CD4-positive, alpha-beta memory T cell (primary cell): ENCODE measurements at regions of chr12 and their contacts with region 1.

Region 1: DNA sequence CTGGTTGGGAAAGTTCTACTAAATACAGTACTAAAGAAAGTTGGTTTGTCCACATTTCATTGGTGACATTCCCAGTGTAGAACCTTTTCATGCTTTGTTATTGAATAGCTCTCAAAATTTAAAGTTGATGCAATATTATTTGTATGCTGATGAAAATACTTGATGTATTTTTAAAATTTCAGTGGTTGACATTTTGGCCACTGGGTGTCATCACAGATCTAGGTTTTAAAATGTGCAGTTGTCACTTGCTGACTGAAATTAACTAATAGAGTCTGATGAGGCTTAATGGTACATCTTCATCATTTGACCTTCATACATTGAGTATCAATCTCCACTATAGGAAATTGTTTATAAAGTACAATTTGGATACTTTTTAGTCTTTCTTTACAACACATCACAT is 37.1 kb downstream of the CMAS start:
- DNase-seq: peak; percentile 38 to 55 (median 51)
- H3K4me3 ChIP-seq: no peak overlapping the region
- H3K4me3 Mint-ChIP-seq: no peak overlapping the region
- H3K27ac ChIP-seq: no peak overlapping the region
- H3K27ac Mint-ChIP-seq: no peak overlapping the region
- H3K4me1 ChIP-seq: no peaks in the 10 kb centered on the region
- H3K4me1 Mint-ChIP-seq: no peaks in the 10 kb centered on the region
- H3K27me3 ChIP-seq: no peaks in the 10 kb centered on the region
- H3K27me3 Mint-ChIP-seq: no peaks in the 10 kb centered on the region

Region 2: GRCh38 chr12:21891751-21892217 is 191.4 kb before region 1 on chr12:
- CTCF ChIA-PET with region 1: no interaction called
- POLR2A ChIA-PET with region 1: no interaction called
- intact Hi-C with region 1: no loop called
- DNase-seq: no peak
- H3K4me3 ChIP-seq: no peak overlapping the region
- H3K4me3 Mint-ChIP-seq: no peak overlapping the region
- H3K27ac ChIP-seq: no peak overlapping the region
- H3K27ac Mint-ChIP-seq: no peak overlapping the region
- H3K4me1 ChIP-seq: no peaks in the 10 kb centered on the region
- H3K4me1 Mint-ChIP-seq: no peaks in the 10 kb centered on the region
- H3K27me3 ChIP-seq: no peaks in the 10 kb centered on the region
- H3K27me3 Mint-ChIP-seq: peaks cover 0 to 3% of the 10 kb centered on the region in 2 donors

Region 3: DNA sequence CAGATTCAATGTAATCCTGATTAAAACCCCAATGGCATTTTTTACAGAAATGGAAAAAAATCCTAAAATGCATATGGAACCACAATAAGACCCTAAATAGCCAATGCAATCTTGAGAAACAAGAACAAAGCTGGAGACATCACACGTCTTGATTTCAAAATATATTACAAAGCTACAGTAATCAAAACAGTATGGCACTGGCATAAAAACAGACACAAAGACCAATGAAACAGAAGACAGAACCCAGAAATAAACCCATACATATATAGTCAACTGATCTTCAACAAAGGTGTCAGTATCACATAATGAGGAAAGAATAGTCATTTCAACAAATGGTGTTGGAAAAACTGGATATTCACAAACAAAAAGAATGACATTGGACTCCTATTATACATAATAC is 132.5 kb before region 1 on chr12:
- CTCF ChIA-PET with region 1: no interaction called
- POLR2A ChIA-PET with region 1: no interaction called
- intact Hi-C with region 1: no loop called
- DNase-seq: no peak
- H3K4me3 ChIP-seq: no peak overlapping the region
- H3K4me3 Mint-ChIP-seq: peak overlapping the region in 1 of 8 donors; percentile 16
- H3K27ac ChIP-seq: no peak overlapping the region
- H3K27ac Mint-ChIP-seq: no peak overlapping the region
- H3K4me1 ChIP-seq: no peaks in the 10 kb centered on the region
- H3K4me1 Mint-ChIP-seq: no peaks in the 10 kb centered on the region
- H3K27me3 ChIP-seq: no peaks in the 10 kb centered on the region
- H3K27me3 Mint-ChIP-seq: peaks cover 2 to 3% of the 10 kb centered on the region in 2 donors

Region 4: GRCh38 chr12:22069856-22070565 is 13.2 kb before region 1 on chr12:
- CTCF ChIA-PET with region 1: interaction called, 18 read pairs
- POLR2A ChIA-PET with region 1: no interaction called
- intact Hi-C with region 1: no loop called
- DNase-seq: no peak
- H3K4me3 ChIP-seq: no peak overlapping the region
- H3K4me3 Mint-ChIP-seq: no peak overlapping the region
- H3K27ac ChIP-seq: no peak overlapping the region
- H3K27ac Mint-ChIP-seq: no peak overlapping the region
- H3K4me1 ChIP-seq: no peaks in the 10 kb centered on the region
- H3K4me1 Mint-ChIP-seq: peaks cover 0 to 2% (median 0%) of the 10 kb centered on the region in 4 donors
- H3K27me3 ChIP-seq: no peaks in the 10 kb centered on the region
- H3K27me3 Mint-ChIP-seq: no peaks in the 10 kb centered on the region

Region 5: DNA sequence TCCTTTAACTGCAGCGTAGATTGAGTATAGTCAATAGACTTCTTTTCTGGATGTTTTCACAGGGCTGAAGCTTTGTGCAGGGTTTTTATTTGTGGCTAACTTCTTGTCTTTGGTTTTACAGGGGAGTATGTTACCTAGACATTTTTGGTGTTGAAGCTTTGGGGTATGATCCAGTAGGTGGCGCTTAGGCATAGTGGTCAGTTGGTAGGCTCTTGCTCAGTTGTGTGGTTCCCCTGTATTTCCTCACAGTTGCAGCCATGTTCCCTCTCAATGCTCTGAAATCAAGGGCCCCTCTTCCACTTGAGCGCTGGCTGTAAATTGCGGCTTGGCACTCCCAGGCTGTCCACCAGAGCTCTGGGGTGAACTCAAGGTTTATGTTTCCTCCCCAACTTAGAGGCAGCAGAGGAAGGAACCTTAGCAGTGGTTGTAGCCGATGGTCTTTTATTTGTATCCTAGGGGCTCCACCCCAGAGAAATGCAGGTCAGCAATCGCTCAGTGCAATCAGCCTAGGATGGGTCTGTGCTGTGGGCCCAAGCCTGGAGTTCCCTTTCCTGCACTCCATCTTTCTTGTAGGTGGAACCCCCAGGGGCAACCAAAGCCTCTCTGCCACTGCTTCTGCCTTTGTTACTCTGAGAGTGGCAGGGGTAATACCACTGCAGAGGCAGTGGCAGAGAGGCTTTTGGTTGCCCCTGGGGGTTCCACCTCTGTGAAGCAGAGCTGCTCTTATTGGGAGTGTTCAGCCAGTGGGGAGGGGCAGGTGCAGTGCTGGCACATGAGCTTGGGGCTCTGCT is 18.0 kb after region 1 on chr12:
- CTCF ChIA-PET with region 1: interaction called, 21 read pairs
- POLR2A ChIA-PET with region 1: no interaction called
- intact Hi-C with region 1: no loop called
- DNase-seq: peak in 4 of 5 donors; percentile 45 to 55 (median 47)
- H3K4me3 ChIP-seq: no peak overlapping the region
- H3K4me3 Mint-ChIP-seq: peak overlapping the region in 1 of 8 donors; percentile 32
- H3K27ac ChIP-seq: no peak overlapping the region
- H3K27ac Mint-ChIP-seq: peak overlapping the region in 1 of 7 donors; percentile 13
- H3K4me1 ChIP-seq: peaks cover 14% of the 10 kb centered on the region
- H3K4me1 Mint-ChIP-seq: peaks cover 7 to 17% (median 13%) of the 10 kb centered on the region in 4 donors
- H3K27me3 ChIP-seq: no peaks in the 10 kb centered on the region
- H3K27me3 Mint-ChIP-seq: no peaks in the 10 kb centered on the region

Region 6: DNA sequence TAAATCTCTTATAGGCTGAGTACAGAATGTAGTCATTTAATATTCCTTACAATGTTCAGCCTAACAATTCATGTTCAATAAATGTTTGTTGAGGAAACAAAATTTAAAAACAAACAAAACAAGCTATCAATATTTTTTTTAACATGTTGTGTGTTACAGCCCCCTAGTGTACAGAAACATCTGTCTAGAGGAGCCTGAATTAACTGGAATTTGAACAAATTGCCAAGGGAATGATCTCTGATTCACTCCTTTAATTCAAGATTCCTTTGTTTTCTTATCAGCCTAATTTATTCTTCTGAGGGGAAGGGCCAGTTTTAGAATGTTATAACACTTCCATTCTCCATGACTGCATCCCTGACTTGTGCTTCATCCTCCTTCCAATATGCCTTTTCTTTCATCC is 90.0 kb after region 1 on chr12:
- CTCF ChIA-PET with region 1: interaction called, 4 read pairs
- POLR2A ChIA-PET with region 1: no interaction called
- intact Hi-C with region 1: loop called (anchors 1 kb)
- DNase-seq: no peak
- H3K4me3 ChIP-seq: no peak overlapping the region
- H3K4me3 Mint-ChIP-seq: no peak overlapping the region
- H3K27ac ChIP-seq: no peak overlapping the region
- H3K27ac Mint-ChIP-seq: no peak overlapping the region
- H3K4me1 ChIP-seq: no peaks in the 10 kb centered on the region
- H3K4me1 Mint-ChIP-seq: peaks cover 4 to 5% (median 5%) of the 10 kb centered on the region in 4 donors
- H3K27me3 ChIP-seq: no peaks in the 10 kb centered on the region
- H3K27me3 Mint-ChIP-seq: peaks cover 0 to 2% of the 10 kb centered on the region in 2 donors

Region 7: DNA sequence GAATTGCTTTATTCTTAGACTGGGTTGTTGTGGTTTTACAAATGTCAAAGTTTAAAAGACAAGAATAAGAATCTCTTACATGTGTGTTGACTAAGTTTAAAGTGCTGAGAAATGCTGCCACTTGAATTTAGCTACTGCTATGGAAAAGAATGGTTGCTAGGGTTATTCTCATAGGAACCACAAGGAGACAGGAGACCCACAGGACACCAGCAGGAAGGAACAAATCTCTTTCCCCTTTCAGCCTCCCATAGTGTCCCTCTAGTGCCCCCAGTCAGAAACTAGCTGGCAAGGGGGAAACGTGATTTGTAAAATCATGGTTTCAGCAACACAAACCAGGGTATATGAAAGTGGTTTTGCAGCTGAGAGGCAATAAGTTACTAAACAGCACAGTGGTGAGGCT is 148.7 kb after region 1 on chr12:
- CTCF ChIA-PET with region 1: no interaction called
- POLR2A ChIA-PET with region 1: no interaction called
- intact Hi-C with region 1: no loop called
- DNase-seq: no peak
- H3K4me3 ChIP-seq: no peak overlapping the region
- H3K4me3 Mint-ChIP-seq: no peak overlapping the region
- H3K27ac ChIP-seq: no peak overlapping the region
- H3K27ac Mint-ChIP-seq: no peak overlapping the region
- H3K4me1 ChIP-seq: no peaks in the 10 kb centered on the region
- H3K4me1 Mint-ChIP-seq: peaks cover 6 to 21% (median 12%) of the 10 kb centered on the region in 4 donors
- H3K27me3 ChIP-seq: no peaks in the 10 kb centered on the region
- H3K27me3 Mint-ChIP-seq: no peaks in the 10 kb centered on the region

Region 8: GRCh38 chr12:22250762-22251161 is 167.6 kb after region 1 on chr12:
- CTCF ChIA-PET with region 1: no interaction called
- POLR2A ChIA-PET with region 1: no interaction called
- intact Hi-C with region 1: no loop called
- DNase-seq: peak in 2 of 5 donors; percentile 10 to 31
- H3K4me3 ChIP-seq: no peak overlapping the region
- H3K4me3 Mint-ChIP-seq: peak overlapping the region in 1 of 8 donors; percentile 24
- H3K27ac ChIP-seq: no peak overlapping the region
- H3K27ac Mint-ChIP-seq: peak overlapping the region in 2 of 7 donors; percentile 29 to 55
- H3K4me1 ChIP-seq: peaks cover 12% of the 10 kb centered on the region
- H3K4me1 Mint-ChIP-seq: peaks cover 7 to 18% (median 12%) of the 10 kb centered on the region in 4 donors
- H3K27me3 ChIP-seq: no peaks in the 10 kb centered on the region
- H3K27me3 Mint-ChIP-seq: no peaks in the 10 kb centered on the region

Region 9: DNA sequence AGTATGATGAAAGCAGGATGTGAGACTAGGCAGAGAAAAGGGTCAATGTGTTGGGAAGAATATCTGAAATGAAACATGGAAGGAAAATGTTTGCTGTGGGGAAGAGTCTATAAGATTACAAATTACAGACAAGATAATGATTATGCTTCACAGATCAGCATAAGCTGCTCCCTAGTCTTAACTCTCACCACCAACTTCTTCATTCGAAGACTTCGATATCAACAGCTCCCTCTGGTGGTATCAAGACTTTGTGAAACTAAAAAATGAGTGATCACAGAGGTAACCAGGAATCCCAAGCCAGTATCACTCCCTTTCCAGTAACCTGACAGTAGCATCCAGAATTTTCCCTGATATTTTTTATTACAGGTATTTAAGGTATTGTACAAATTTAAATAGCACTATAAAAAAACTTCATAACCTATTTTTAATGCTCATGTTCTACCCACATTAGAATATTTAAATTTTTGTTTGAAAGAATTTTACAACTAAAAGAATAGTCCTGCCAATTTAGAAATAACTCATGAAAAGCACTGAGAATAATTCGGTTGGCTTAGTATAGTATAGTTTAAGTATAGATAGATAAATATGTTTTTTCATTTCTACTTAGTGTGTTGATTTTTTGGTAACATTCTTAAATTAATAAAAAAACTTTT is 376.8 kb after region 1 on chr12:
- CTCF ChIA-PET with region 1: interaction called, 110 read pairs
- POLR2A ChIA-PET with region 1: no interaction called
- intact Hi-C with region 1: loop called (anchors 1 kb)
- DNase-seq: peak in 4 of 5 donors; percentile 41 to 46 (median 44)
- H3K4me3 ChIP-seq: no peak overlapping the region
- H3K4me3 Mint-ChIP-seq: no peak overlapping the region
- H3K27ac ChIP-seq: no peak overlapping the region
- H3K27ac Mint-ChIP-seq: peak overlapping the region in 2 of 7 donors; percentile 5 to 38
- H3K4me1 ChIP-seq: no peaks in the 10 kb centered on the region
- H3K4me1 Mint-ChIP-seq: peaks cover 0 to 4% (median 2%) of the 10 kb centered on the region in 4 donors
- H3K27me3 ChIP-seq: no peaks in the 10 kb centered on the region
- H3K27me3 Mint-ChIP-seq: no peaks in the 10 kb centered on the region

Region 10: DNA sequence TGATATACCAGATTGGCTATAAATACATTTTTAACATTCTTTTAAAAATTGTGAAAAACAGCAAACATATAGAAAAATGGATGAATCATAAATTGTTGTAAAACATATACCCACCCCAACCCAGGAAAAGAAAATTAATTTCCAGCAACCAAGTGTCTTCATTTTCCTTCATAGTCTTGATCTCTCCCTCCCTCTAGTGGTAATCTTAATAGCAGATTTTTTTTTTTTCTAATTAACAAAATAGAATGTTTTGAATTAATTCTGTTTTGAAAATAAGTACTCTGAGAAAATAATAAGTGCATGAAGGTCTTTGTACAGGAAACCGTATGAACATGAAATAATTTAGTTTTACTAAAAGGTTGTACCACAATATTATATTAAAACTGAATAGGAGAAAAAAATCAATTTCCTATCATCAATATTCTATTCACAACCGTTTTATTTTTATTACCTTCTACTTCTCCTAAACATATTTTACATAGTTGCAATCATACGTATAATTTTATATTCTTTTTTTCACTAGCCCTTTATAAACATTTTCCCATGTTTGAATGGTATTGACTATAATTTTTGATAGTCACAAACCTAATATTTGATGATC is 548.8 kb after region 1 on chr12:
- CTCF ChIA-PET with region 1: no interaction called
- POLR2A ChIA-PET with region 1: no interaction called
- intact Hi-C with region 1: loop called (anchors 1 kb)
- DNase-seq: peak in 4 of 5 donors; percentile 31 to 39 (median 37)
- H3K4me3 ChIP-seq: no peak overlapping the region
- H3K4me3 Mint-ChIP-seq: peak overlapping the region in 1 of 8 donors; percentile 36
- H3K27ac ChIP-seq: no peak overlapping the region
- H3K27ac Mint-ChIP-seq: peak overlapping the region in 3 of 7 donors; percentile 8 to 33 (median 23)
- H3K4me1 ChIP-seq: peaks cover 75% of the 10 kb centered on the region
- H3K4me1 Mint-ChIP-seq: peaks cover 39 to 73% (median 57%) of the 10 kb centered on the region in 4 donors
- H3K27me3 ChIP-seq: no peaks in the 10 kb centered on the region
- H3K27me3 Mint-ChIP-seq: no peaks in the 10 kb centered on the region